Natural killer cell (primary cell): ENCODE measurements at regions of chr7 and their contacts with region 1.

Region 1: DNA sequence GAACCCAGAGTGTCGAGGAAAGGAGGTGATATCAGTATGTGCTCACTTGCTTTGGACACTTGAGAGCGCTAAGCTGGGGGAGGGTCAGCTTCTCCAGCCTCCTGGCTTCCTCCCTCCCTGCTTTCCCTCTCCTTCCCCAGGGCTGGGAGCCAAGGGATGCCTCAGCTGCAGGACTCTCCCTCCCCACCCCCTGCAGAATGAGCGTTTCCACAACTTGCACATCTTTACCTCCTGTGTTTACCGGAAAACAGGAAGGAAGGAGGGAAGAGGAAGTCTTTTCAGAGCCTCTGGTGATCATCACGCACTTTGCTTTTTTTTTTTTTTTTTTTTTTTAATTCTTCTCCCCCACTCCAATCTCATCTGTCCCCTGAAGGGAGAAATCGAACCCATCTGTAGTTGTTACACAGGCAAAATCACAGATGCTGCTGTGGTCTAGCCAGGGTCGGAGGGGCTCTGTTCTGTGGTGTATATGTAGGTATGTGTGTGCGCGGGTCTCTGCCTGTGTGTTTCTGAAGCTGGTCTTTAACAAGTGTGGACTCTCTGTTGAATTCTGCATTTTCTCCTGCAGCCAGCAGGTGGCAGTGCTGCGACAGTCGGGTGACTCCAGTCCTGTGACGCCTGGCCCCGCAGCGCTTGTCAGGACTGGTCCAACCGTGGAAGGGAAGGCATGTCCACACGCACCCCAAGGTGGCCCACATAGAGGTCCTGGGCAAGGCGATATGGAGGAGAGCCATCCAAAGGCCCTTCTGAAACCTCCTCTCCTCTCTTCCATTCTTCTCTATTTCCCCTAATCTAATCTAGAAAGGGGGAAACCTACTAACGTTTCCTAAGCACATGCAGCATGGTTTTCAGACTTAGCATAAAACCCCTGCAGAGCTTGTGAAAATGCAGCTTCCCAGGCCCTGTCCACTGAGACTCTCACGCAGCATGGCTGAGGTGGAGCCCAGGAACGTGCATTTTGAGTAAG is 257.6 kb downstream of the PLXNA4 start:
- DNase-seq: peak; percentile 76 to 89
- ATAC-seq: peak; percentile 86 to 99 (median 98)
- H3K4me3 ChIP-seq: no peak overlapping the region
- H3K4me3 Mint-ChIP-seq: no peak overlapping the region
- H3K27ac ChIP-seq: no peak overlapping the region
- H3K27ac Mint-ChIP-seq: no peak overlapping the region
- H3K4me1 ChIP-seq: peaks cover 9% of the 10 kb centered on the region
- H3K4me1 Mint-ChIP-seq: peaks cover 14 to 17% of the 10 kb centered on the region in 2 donors
- H3K27me3 ChIP-seq: peaks cover 4% of the 10 kb centered on the region
- H3K27me3 Mint-ChIP-seq: peaks cover 36 to 38% of the 10 kb centered on the region in 2 donors
- CTCF ChIP-seq: peak; percentile 94

Region 2: DNA sequence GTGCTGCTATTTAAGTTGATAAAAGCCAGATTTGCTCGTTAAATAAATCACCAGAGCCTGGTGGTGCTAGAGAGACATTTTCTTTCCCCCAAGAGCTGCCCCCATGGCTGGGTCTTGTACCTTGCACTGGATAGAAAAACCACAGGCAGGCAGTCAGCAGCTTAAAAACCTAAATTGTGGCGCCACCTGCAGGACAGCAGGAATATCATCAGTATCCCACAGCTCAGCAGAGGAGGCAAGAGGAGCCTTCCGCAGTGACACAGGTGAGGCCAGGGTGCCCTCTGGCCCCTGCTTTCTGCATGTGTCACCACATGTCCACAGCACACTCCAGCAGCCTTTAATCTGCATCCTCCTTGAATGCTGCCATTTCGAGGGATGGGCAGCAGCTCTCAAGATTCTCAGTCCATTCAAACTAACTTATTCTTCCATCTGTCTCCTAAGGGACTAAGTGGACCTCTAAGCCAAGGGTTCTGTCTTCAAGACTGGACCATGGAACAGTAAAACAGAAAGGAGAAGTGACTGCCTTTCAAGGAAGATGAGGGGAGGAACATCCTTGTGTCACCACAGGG is 262.2 kb after region 1 on chr7:
- intact Hi-C with region 1: loop called (anchors 1 kb)
- DNase-seq: peak; percentile 70 to 87
- ATAC-seq: peak; percentile 74 to 80 (median 80)
- H3K4me3 ChIP-seq: no peak overlapping the region
- H3K4me3 Mint-ChIP-seq: no peak overlapping the region
- H3K27ac ChIP-seq: no peak overlapping the region
- H3K27ac Mint-ChIP-seq: no peak overlapping the region
- H3K4me1 ChIP-seq: peaks cover 19% of the 10 kb centered on the region
- H3K4me1 Mint-ChIP-seq: peaks cover 2 to 18% of the 10 kb centered on the region in 2 donors
- H3K27me3 ChIP-seq: peaks cover 18% of the 10 kb centered on the region
- H3K27me3 Mint-ChIP-seq: peaks cover 14 to 27% of the 10 kb centered on the region in 2 donors
- CTCF ChIP-seq: peak; percentile 86